ENCODE measurements at regions of chr21 and their contacts with region 1.

Region 1: DNA sequence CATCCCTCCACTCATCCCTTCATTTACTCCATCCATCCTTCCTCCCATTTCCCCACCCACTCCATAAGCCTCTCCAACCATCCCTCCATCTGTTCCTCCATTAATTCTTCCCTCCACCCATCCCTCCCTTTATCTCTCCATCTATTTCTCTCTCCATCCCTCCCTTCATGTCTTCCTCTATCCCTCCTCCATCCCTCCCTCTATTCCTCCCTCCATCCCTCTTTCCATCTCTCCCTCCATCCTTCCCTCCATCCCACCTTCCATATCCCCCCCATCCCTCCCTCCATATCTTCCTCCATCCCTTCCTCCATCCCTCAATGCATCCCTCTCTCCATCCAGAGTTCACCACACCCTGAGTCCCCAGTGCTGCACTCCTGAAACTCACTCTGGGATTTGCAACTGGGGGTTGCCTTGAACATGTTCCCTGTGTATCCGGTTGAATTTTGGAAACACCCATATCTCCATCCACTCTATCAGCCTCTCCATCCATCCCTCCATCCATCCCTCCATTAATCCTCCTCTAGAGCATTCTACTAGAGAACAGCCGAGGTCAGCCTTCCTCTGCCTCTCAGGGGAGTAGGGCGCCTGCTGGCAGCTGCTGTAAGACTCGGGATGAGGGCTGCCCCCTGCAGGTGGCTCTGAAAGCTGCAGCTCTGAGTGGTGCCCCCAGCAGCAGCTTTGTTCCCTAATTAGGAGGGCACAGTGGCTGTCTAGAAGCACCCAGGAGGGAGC is 39.4 kb downstream of the ABCG1 start:
- DNase-seq: peak; percentile 69 to 85 (median 77)
- H3K4me3 ChIP-seq: no peak overlapping the region
- H3K4me3 Mint-ChIP-seq: no peak overlapping the region
- H3K27ac ChIP-seq: no peak overlapping the region
- H3K27ac Mint-ChIP-seq: peak overlapping the region in 4 of 8 donors; percentile 8 to 77 (median 59)
- H3K4me1 ChIP-seq: peaks cover 5% of the 10 kb centered on the region
- H3K4me1 Mint-ChIP-seq: peaks cover 23 to 37% (median 30%) of the 10 kb centered on the region in 3 donors
- H3K27me3 ChIP-seq: no peaks in the 10 kb centered on the region
- H3K27me3 Mint-ChIP-seq: no peaks in the 10 kb centered on the region

Region 2: DNA sequence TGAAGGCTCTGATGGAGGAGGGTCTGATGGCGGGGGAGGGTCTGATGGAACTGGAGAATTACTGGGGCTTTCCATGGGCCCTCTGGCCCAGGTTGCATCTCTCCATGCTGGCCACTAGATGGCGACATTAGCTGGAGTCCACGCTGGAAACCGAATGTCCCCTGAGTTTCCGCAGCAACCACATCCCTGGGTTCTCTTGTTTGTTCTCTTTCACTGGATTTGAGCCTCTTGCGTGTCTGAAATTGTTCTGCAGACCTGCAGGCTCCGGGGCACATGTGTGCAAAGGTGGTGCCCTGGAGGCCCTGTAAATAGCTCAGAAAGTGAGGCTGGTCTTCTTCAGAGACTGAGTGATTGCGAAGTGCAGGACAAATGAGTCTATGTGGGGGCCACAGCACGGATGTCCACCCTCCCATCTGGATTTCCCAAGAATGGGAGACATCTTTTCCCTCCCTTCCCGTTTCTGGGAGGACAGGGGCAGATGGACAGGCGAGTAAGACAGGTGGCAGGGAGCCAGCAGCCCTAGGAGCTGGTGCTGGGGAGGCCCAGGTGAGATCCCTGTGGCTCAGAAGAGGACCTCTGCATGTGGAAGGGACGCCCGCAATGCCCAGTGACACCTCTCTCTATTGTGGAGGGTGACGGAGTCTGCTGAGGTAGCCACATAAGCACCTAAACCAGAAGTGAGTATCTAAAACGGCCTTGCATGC is 112.6 kb before region 1 on chr21:
- CTCF ChIA-PET with region 1: interaction called, 106 read pairs
- POLR2A ChIA-PET with region 1: no interaction called
- DNase-seq: peak; percentile 37 to 76 (median 62)
- H3K4me3 ChIP-seq: no peak overlapping the region
- H3K4me3 Mint-ChIP-seq: no peak overlapping the region
- H3K27ac ChIP-seq: no peak overlapping the region
- H3K27ac Mint-ChIP-seq: peak overlapping the region in 1 of 8 donors; percentile 72
- H3K4me1 ChIP-seq: peaks cover 4% of the 10 kb centered on the region
- H3K4me1 Mint-ChIP-seq: peaks cover 6 to 11% (median 9%) of the 10 kb centered on the region in 3 donors
- H3K27me3 ChIP-seq: no peaks in the 10 kb centered on the region
- H3K27me3 Mint-ChIP-seq: peaks cover 6 to 9% of the 10 kb centered on the region in 2 donors

Region 3: DNA sequence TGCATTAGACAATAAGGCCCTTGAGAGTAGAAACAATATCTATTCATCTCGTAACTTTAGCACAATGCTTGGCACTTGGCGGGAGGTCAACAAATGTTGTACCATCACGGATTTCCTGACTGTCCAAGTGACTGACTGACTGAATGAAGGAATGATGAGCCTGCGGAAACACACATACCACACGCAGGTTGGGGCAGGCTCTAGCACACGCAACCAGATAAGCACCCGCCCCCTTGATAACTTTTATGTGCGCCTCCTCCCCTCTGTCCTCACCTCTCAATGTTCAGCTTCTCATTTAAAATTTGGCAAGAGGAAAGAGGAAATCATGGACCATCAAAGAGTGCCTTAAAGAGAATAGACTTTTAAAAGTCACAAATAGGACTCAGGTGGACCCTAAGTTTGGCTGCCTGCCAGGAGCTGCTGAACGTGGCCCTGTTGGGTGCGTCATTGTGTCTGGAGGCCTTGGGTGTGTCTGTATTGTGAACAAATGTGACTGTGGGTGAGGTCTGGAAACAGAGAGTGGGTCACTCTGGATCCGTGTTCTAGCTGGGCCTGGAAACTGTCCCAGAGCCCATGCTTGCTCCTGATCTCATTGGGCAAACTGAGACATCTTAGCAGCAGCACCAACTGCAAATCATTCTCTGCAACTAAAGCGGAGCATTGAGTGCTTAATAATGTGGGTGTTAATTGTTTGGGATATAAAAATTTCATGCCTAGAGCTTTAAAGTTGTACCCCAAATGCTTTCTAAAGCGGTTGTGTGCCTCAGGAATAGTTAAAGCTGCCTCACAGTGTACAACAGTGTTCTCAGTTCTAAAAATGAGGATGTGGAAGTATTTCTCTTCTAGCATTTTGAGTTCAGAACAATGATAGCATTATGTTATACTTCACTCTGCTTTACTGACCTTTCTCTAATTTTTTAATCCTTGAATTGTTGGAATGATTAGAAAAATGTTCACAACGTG is 86.9 kb before region 1 on chr21:
- CTCF ChIA-PET with region 1: interaction called, 72 read pairs
- POLR2A ChIA-PET with region 1: no interaction called
- DNase-seq: no peak
- H3K4me3 ChIP-seq: no peak overlapping the region
- H3K4me3 Mint-ChIP-seq: no peak overlapping the region
- H3K27ac ChIP-seq: no peak overlapping the region
- H3K27ac Mint-ChIP-seq: peak overlapping the region in 1 of 8 donors; percentile 38
- H3K4me1 ChIP-seq: no peaks in the 10 kb centered on the region
- H3K4me1 Mint-ChIP-seq: peaks cover 0 to 5% (median 0%) of the 10 kb centered on the region in 3 donors
- H3K27me3 ChIP-seq: no peaks in the 10 kb centered on the region
- H3K27me3 Mint-ChIP-seq: no peaks in the 10 kb centered on the region

Region 4: GRCh38 chr21:42233067-42233961 is 25.0 kb before region 1 on chr21:
- CTCF ChIA-PET with region 1: interaction called, 22 read pairs
- POLR2A ChIA-PET with region 1: interaction called, 3 read pairs
- DNase-seq: peak; percentile 77 to 88 (median 84)
- H3K4me3 ChIP-seq: peak overlapping the region; percentile 72
- H3K4me3 Mint-ChIP-seq: peak overlapping the region; percentile 69 to 91 (median 75)
- H3K27ac ChIP-seq: peak overlapping the region; percentile 78
- H3K27ac Mint-ChIP-seq: peak overlapping the region; percentile 68 to 99 (median 97)
- H3K4me1 ChIP-seq: peaks cover 89% of the 10 kb centered on the region
- H3K4me1 Mint-ChIP-seq: peaks cover 84 to 98% (median 98%) of the 10 kb centered on the region in 3 donors
- H3K27me3 ChIP-seq: no peaks in the 10 kb centered on the region
- H3K27me3 Mint-ChIP-seq: peaks cover 0 to 3% of the 10 kb centered on the region in 2 donors

Region 5: GRCh38 chr21:42381334-42381984 is 123.1 kb after region 1 on chr21:
- CTCF ChIA-PET with region 1: no interaction called
- POLR2A ChIA-PET with region 1: no interaction called
- DNase-seq: peak in 2 of 5 donors; percentile 30 to 75
- H3K4me3 ChIP-seq: no peak overlapping the region
- H3K4me3 Mint-ChIP-seq: no peak overlapping the region
- H3K27ac ChIP-seq: no peak overlapping the region
- H3K27ac Mint-ChIP-seq: peak overlapping the region in 1 of 8 donors; percentile 73
- H3K4me1 ChIP-seq: peaks cover 10% of the 10 kb centered on the region
- H3K4me1 Mint-ChIP-seq: peaks cover 8 to 18% (median 8%) of the 10 kb centered on the region in 3 donors
- H3K27me3 ChIP-seq: no peaks in the 10 kb centered on the region
- H3K27me3 Mint-ChIP-seq: peaks cover 0 to 1% of the 10 kb centered on the region in 2 donors

Measured in CD8-positive, alpha-beta memory T cell (primary cell).